IMR-90 (cell line): ENCODE measurements at regions of chr3 and their contacts with region 1.

Region 1: DNA sequence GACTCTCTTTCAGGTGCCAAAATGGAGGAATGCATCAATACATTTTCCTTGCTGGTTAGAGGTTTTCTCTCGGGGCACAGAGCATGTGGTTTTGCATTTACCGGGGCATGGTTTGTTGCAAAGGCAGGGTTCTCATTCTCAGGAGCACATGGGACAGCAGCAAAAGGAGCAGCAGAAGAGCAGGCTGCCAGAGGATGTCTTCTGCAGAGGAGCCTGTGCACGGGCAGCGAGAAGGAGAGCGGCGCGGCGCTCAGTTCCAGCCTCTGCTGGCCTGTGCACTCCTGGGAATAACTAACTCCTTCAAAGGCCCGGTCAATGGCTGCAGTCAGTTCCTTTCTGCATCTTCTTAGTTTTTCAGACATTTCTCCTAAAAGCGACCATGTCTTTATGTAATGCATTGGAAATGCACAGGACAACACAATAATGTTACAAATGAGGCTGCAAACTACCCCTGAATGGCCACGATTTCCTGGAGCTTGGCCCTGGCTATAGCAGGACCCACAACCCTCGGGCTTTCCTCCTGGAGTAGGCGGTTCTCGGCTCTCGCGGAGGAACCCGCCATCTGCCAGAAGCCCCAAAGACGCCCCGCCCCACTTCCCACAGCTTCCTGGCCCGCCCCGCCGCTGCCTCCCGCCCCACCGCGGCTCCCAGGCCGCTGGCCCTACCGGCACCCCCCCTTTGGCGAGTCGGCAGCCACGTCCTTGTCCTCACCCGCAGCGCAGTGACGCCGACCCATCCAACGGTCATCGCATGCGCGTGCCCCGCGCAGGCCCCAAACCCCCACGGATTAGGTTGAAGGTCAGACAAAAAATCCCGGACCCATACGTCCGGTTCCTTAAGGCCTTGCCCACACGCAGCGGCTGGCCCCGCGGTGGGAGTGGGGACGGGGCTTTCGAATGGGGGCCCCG is at the start of gene C3orf62:
- DNase-seq: peak; percentile 73
- ATAC-seq: peak; percentile 98
- H3K4me3 ChIP-seq: peak within 1 kb of the TSS; percentile 47
- H3K27ac ChIP-seq: peak within 1 kb of the TSS; percentile 90
- H3K4me1 ChIP-seq: peaks cover 11% of the 10 kb centered on the region
- H3K27me3 ChIP-seq: no peaks in the 10 kb centered on the region
- CTCF ChIP-seq: no peak
- POLR2A ChIP-seq: no peak
- RAD21 ChIP-seq: no peak
- total RNA-seq, gene C3orf62: 0.83 and 0.90 TPM in 2 replicates

Region 2: DNA sequence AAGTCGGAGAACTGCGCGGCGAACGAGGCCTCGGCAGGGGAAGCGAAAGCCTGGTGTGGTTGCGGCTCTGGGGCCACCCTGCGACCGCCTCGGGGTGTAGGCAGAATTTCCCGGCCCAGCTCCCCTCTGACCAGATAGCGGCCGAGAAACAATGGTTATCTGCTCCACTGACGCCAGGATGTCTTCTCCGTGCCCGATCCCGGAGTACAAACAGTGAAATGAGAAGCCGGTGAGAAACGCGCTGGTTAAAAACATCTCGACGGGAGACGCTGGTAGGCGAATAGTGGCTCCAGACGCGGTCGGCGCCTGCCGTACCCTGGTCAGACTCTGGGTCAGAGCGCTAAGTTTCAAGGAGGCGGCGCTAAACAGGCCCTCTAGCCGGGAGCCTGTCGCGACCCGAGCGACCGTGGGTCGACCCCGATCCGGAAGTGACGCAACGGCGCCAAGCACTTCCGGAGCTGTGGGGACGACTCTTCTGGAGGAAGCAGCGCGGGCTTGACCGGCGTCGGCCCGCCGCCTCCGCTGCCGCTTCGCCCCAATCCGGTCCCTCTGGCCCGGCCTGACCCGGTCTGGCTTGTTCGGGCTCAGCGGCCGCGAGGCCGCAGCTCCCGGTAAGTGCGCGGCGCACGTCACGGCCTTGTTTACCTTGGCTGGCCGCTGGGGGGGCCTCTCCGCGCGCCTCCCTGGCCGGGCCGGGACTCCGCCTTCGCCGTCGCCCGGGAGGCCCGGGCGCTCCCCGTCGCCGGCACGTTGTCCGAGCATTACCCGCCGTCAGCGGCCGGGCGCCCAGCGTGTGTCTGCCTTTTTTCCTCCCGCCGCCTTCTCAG is 358.1 kb before region 1 on chr3 and contains the start of gene ARIH2:
- CTCF ChIA-PET with region 1: no interaction called
- POLR2A ChIA-PET with region 1: no interaction called
- dilution Hi-C with region 1: no loop called
- in situ Hi-C with region 1: no loop called
- intact Hi-C with region 1: no loop called
- DNase-seq: peak; percentile 91
- ATAC-seq: peak; percentile 92
- H3K4me3 ChIP-seq: peak within 1 kb of the TSS; percentile 70
- H3K27ac ChIP-seq: peak within 1 kb of the TSS; percentile 94
- H3K4me1 ChIP-seq: peaks cover 7% of the 10 kb centered on the region
- H3K27me3 ChIP-seq: no peaks in the 10 kb centered on the region
- CTCF ChIP-seq: no peak
- POLR2A ChIP-seq: peak; percentile 87
- RAD21 ChIP-seq: peak; percentile 12; the same call in 1 of the 2 replicates
- total RNA-seq, gene ARIH2: 73.0 and 93.7 TPM in 2 replicates

Region 3: GRCh38 chr3:49133226-49133951 is 143.3 kb before region 1 on chr3:
- CTCF ChIA-PET with region 1: no interaction called
- POLR2A ChIA-PET with region 1: interaction called, 3 read pairs
- dilution Hi-C with region 1: no loop called
- in situ Hi-C with region 1: no loop called
- intact Hi-C with region 1: loop called (anchors 2 kb)
- DNase-seq: peak; percentile 85
- ATAC-seq: peak; percentile 85
- H3K4me3 ChIP-seq: peak overlapping the region; percentile 68
- H3K27ac ChIP-seq: peak overlapping the region; percentile 99
- H3K4me1 ChIP-seq: peaks cover 9% of the 10 kb centered on the region
- H3K27me3 ChIP-seq: no peaks in the 10 kb centered on the region
- CTCF ChIP-seq: no peak
- POLR2A ChIP-seq: 0 out of 2 replicates have a peak, but pooled peaks have one; percentile 46
- RAD21 ChIP-seq: no peak